Sigmoid colon (tissue), 7 donors: ENCODE measurements at regions of chr17 and their contacts with region 1.

Region 1: DNA sequence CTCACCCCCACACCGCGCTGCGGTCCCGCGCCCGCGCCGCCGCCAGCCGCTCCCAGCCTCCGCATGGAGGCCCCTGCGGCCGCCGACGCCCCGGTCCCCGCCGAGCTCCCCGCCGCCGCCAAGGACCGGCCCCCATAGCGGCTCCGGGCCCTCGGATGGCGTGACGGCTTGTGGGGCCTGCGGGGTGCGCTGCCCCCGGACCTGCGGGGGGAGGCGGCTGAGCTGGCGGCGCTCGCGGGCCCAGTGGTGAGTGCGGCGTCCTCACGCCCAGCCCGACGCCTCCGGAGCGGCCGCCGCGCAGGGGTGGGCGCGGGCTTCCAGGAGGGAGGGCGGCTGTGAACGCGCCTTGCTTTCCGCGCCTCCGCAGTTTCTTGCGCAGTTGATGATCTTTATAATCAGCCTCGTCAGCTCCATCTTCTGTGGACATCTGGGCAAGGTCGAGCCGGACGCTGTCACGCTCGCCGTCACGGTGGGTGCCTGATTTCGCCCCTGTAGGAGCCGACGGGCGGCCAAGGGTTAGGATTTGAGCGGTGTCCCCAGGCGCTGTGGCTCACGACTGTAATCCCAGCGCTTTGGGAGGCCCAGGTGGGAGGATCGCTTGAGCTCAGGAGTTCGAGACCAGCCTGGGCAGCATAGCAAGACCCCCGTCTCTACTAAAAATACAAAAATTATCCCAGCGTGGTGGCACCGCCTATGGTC is 46.4 kb downstream of the SLC47A1 start:
- DNase-seq: no peak
- H3K4me3 ChIP-seq: peak overlapping the region; percentile 11 to 60 (median 50)
- H3K27ac ChIP-seq: peak overlapping the region in 3 of 4 donors; percentile 32 to 61 (median 59)
- H3K4me1 ChIP-seq: peaks cover 0 to 17% (median 9%) of the 10 kb centered on the region in 4 donors
- H3K27me3 ChIP-seq: no peaks in the 10 kb centered on the region
- CTCF ChIP-seq: no peak
- EP300 ChIP-seq: no peak
- POLR2A ChIP-seq: no peak

Region 2: GRCh38 chr17:19533718-19534561 is 46.1 kb before region 1 on chr17 and contains the start of gene SLC47A1:
- intact Hi-C with region 1: loop called (anchors 5 kb)
- DNase-seq: no peak
- H3K4me3 ChIP-seq: peak within 1 kb of the TSS; percentile 30 to 62 (median 54)
- H3K27ac ChIP-seq: peak within 1 kb of the TSS in 1 of 4 donors; percentile 32
- H3K4me1 ChIP-seq: peaks cover 0 to 17% (median 7%) of the 10 kb centered on the region in 4 donors
- H3K27me3 ChIP-seq: peaks cover 0 to 16% (median 5%) of the 10 kb centered on the region in 3 donors
- CTCF ChIP-seq: no peak
- EP300 ChIP-seq: no peak
- POLR2A ChIP-seq: no peak
- total RNA-seq, gene SLC47A1: 0.82 to 8.2 (median 2.5) TPM